PC-9 (cell line): ENCODE measurements at regions of chr1 and their contacts with region 1.

Region 1: DNA sequence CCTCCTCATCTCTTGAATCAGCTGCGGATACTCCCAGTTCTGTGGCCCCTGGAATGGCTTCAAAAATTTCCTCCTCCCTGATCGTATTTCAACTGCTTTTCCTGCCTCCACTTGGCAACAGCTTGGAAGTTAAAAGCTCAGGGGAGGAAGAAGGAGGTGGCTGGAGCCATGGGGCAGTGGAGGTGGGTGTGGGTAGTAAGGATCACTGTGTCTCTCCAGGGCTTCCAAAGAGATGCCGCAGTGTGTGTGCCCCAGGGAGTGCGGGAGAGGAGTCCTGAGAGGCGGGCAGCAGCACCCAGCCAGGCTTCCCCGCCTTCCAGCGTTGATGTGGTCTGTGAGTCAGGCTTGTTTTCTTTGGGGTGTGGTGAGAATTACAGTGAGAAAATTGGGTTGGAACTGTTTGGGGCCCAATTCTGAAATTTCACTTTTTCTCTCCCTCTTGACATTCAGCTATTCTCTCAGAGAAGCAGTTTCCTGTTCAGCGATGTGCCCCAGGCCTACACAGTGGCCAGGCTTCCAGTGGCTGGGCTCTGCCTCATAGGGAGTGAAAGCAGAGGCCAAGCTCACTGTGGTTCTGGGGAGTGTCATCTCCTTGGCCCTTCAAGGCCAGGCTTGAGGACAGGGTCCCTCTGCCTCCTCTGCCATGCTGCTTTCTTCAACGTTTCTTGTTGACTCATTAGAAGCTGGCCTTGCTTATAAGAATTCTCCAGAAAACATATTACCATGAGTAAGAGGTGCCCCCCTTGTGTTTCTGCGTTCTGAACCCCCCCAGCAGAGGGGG is 69.0 kb downstream of the PGM1 start:
- DNase-seq: peak; percentile 91 to 93
- H3K4me3 ChIP-seq: peak overlapping the region; percentile 45; the same call in 1 of the 2 replicates
- H3K27ac ChIP-seq: peak overlapping the region; percentile 100
- H3K4me1 ChIP-seq: peaks cover 62% of the 10 kb centered on the region
- H3K27me3 ChIP-seq: no peaks in the 10 kb centered on the region
- CTCF ChIP-seq: no peak

Region 2: GRCh38 chr1:63575340-63575826 is 86.9 kb before region 1 on chr1:
- CTCF ChIA-PET with region 1: no interaction called
- POLR2A ChIA-PET with region 1: no interaction called
- intact Hi-C with region 1: loop called (anchors 5 kb)
- DNase-seq: peak in 1 of 2 experiments; percentile 50
- H3K4me3 ChIP-seq: no peak overlapping the region
- H3K27ac ChIP-seq: no peak overlapping the region
- H3K4me1 ChIP-seq: no peaks in the 10 kb centered on the region
- H3K27me3 ChIP-seq: no peaks in the 10 kb centered on the region
- CTCF ChIP-seq: peak; percentile 95

Region 3: GRCh38 chr1:63615768-63616420 is 46.4 kb before region 1 on chr1:
- CTCF ChIA-PET with region 1: no interaction called
- POLR2A ChIA-PET with region 1: no interaction called
- intact Hi-C with region 1: loop called (anchors 2 kb)
- DNase-seq: peak; percentile 61 to 63
- H3K4me3 ChIP-seq: no peak overlapping the region
- H3K27ac ChIP-seq: no peak overlapping the region
- H3K4me1 ChIP-seq: peaks cover 38% of the 10 kb centered on the region
- H3K27me3 ChIP-seq: no peaks in the 10 kb centered on the region
- CTCF ChIP-seq: peak; percentile 91

Region 4: GRCh38 chr1:63674238-63674864 is 12.1 kb after region 1 on chr1:
- CTCF ChIA-PET with region 1: interaction called, 13 read pairs
- POLR2A ChIA-PET with region 1: no interaction called
- intact Hi-C with region 1: no loop called
- DNase-seq: peak; percentile 83 to 95
- H3K4me3 ChIP-seq: no peak overlapping the region
- H3K27ac ChIP-seq: peak overlapping the region; percentile 41; the same call in 1 of the 2 replicates
- H3K4me1 ChIP-seq: peaks cover 13% of the 10 kb centered on the region
- H3K27me3 ChIP-seq: no peaks in the 10 kb centered on the region
- CTCF ChIP-seq: peak; percentile 82

Region 5: GRCh38 chr1:63935143-63935542 is 272.9 kb after region 1 on chr1:
- CTCF ChIA-PET with region 1: no interaction called
- POLR2A ChIA-PET with region 1: no interaction called
- intact Hi-C with region 1: no loop called
- DNase-seq: peak in 1 of 2 experiments; percentile 11
- H3K4me3 ChIP-seq: no peak overlapping the region
- H3K27ac ChIP-seq: no peak overlapping the region
- H3K4me1 ChIP-seq: peaks cover 19% of the 10 kb centered on the region
- H3K27me3 ChIP-seq: no peaks in the 10 kb centered on the region
- CTCF ChIP-seq: peak; percentile 56

Region 6: DNA sequence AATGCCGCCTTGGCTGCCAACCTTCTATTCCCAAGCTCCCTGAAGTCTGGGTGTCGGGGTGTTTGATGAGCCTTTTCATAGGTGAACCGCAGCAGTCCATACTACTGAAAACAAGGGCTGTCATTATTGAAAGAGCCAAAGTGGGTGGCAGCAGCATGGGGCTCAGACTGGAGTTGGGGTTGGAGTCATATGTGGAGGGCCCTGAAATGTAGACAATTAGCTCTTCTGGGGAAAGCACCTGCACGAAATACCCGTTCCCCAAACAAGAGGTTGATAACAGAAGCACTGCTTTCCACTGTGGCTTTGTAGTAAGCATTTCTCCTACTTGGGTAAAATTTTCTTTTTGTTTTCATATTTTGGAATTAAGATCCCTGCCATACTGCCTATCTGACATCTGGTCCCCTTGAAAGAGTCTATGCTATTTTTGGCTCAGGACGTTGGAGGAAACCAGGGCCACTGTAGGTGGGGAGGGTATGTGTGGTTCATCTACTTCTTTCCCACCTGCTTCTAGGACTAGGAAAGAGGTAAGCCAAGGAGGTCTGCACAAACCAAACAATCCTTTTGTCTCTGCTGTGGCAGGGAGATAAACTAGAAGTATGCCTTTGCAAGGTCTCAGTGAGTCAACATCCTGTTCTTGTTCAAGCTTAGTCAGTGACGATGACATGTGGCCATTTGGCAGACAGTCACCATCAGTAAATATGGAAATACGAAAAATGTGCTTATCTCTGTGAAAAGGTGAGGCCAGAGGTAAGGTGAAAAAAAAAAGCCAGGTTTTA is 344.2 kb after region 1 on chr1:
- CTCF ChIA-PET with region 1: no interaction called
- POLR2A ChIA-PET with region 1: no interaction called
- intact Hi-C with region 1: loop called (anchors 10 kb)
- DNase-seq: peak; percentile 71 to 98
- H3K4me3 ChIP-seq: no peak overlapping the region; the same call in 1 of the 2 replicates
- H3K27ac ChIP-seq: peak overlapping the region; percentile 82
- H3K4me1 ChIP-seq: peaks cover 47% of the 10 kb centered on the region
- H3K27me3 ChIP-seq: no peaks in the 10 kb centered on the region
- CTCF ChIP-seq: no peak